Endothelial cell of umbilical vein (primary cell): ENCODE measurements at regions of chr6 and their contacts with region 1.

Region 1: DNA sequence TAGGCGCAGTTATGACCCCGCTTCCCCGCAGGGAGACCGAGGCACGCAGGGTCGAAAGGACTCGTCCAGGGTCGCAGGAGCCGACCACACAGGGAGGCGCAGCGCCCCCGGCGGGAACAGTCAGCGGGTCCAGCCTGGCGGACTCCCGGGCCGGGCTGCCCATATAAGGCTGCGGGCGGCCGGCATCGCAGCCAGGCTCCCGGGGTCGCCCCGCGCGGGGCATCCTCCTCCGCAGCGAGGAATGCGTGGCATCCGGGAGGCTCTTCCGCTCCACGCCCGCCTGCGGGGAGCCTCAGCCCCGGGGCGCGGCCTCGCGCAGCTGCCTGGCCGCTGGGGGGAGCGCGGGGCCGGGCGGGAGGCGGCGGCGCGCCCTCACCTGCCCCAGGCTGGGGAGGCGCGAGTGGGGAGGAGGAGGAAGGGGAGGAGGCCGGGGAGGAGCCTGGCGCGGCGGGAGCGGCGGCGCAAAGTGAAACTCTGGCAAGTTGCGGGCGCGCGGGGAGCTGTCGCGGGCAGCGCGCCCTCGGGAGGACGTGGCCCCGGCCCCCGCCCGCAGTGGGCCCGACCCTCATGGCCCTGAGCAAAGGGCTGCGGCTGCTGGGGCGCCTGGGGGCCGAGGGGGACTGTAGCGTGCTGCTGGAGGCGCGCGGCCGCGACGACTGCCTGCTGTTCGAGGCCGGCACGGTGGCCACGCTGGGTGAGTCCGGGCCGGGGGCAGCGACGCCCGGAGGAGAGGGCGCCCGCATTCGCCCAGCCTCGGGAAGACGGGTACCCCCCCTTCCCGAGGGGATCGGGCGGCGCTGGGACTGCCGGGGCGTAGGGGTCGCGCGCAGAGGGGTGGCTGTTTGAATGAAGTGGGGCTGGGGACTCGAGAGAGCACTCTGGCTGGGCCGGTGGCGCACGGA is at the start of gene SYNJ2:
- DNase-seq: peak; percentile 73
- H3K4me3 ChIP-seq: peak within 1 kb of the TSS; percentile 59 to 91 (median 87)
- H3K27ac ChIP-seq: peak within 1 kb of the TSS; percentile 85
- H3K4me1 ChIP-seq: peaks cover 21% of the 10 kb centered on the region
- H3K27me3 ChIP-seq: no peaks in the 10 kb centered on the region
- CTCF ChIP-seq: peak; percentile 67 to 79
- POLR2A ChIP-seq: peak; percentile 38
- total RNA-seq, gene SYNJ2: 71.8 and 78.2 TPM in 2 replicates

Region 2: DNA sequence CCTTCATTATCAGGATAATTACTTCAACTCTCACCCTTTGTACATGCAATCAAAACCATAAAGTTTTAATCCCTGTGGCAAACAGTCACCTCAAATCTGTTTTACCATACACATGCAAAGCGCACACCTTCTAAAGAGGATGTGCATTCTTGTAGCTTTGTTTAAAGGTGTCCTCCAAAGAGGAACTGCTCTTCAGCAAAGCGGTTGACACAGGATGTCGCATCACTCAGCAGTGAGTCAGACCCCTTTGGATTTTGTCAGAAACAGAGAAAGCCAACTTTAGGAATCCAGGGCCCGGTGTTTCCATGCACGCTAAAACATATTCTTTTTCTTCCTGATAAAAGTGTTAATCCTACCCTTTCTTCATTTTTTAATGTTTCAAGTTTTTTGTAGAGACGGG is 1472.7 kb before region 1 on chr6:
- CTCF ChIA-PET with region 1: no interaction called
- POLR2A ChIA-PET with region 1: no interaction called
- dilution Hi-C with region 1: no loop called
- intact Hi-C with region 1: no loop called
- DNase-seq: no peak
- H3K4me3 ChIP-seq: no peak overlapping the region
- H3K27ac ChIP-seq: no peak overlapping the region
- H3K4me1 ChIP-seq: no peaks in the 10 kb centered on the region
- H3K27me3 ChIP-seq: no peaks in the 10 kb centered on the region
- CTCF ChIP-seq: no peak
- POLR2A ChIP-seq: no peak

Region 3: GRCh38 chr6:158002951-158003853 is 21.6 kb after region 1 on chr6:
- CTCF ChIA-PET with region 1: interaction called, 28 read pairs
- POLR2A ChIA-PET with region 1: no interaction called
- dilution Hi-C with region 1: no loop called
- intact Hi-C with region 1: loop called (anchors 1 kb)
- DNase-seq: peak; percentile 97
- H3K4me3 ChIP-seq: no peak overlapping the region
- H3K27ac ChIP-seq: peak overlapping the region; percentile 91
- H3K4me1 ChIP-seq: peaks cover 32% of the 10 kb centered on the region
- H3K27me3 ChIP-seq: no peaks in the 10 kb centered on the region
- CTCF ChIP-seq: no peak
- POLR2A ChIP-seq: peak; percentile 43

Region 4: GRCh38 chr6:158026054-158026900 is 44.6 kb after region 1 on chr6:
- CTCF ChIA-PET with region 1: interaction called, 44 read pairs
- POLR2A ChIA-PET with region 1: interaction called, 6 read pairs
- dilution Hi-C with region 1: no loop called
- intact Hi-C with region 1: loop called (anchors 1 kb)
- DNase-seq: peak; percentile 98
- H3K4me3 ChIP-seq: no peak overlapping the region
- H3K27ac ChIP-seq: peak overlapping the region; percentile 83
- H3K4me1 ChIP-seq: peaks cover 32% of the 10 kb centered on the region
- H3K27me3 ChIP-seq: no peaks in the 10 kb centered on the region
- CTCF ChIP-seq: peak; percentile 74 to 90
- POLR2A ChIP-seq: no peak

Region 5: DNA sequence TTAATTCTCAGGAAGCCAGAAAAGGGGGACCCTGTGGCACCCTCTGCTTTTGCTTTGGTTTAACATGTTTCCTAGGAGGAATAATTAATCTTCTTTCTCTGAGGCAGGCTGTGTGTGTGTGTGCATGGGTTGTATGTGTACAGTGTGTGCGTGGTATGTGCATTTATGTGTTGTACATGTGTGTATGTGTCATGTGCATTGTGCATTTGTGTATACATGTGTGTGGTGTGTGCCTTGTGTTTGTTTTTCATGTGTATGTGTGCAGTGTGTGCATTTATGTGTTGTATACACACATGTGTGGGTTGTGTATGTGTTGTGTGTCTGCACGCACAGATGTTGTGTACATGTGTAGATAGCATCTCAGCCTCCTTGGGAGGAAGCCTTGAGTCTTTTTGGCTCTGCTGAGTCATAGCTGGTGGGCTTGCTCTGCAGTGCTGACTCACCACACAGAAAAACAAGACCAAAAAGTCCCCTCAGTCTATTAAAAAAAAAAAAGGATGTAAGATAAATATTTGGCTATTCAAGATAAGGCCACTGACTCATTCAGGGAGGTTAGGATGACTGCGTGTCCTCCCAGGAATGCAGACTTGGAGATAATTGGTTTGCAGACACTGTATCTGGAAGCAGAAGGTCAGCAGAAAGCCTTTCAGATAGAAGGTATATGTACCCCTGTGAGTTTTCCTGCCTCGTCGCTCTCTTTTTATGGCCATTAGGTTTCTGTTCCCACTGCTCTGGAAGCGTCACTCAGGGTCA is 58.6 kb after region 1 on chr6:
- CTCF ChIA-PET with region 1: interaction called, 6 read pairs
- POLR2A ChIA-PET with region 1: no interaction called
- dilution Hi-C with region 1: no loop called
- intact Hi-C with region 1: loop called (anchors 1 kb)
- DNase-seq: peak; percentile 99
- H3K4me3 ChIP-seq: no peak overlapping the region
- H3K27ac ChIP-seq: peak overlapping the region; percentile 99
- H3K4me1 ChIP-seq: peaks cover 38% of the 10 kb centered on the region
- H3K27me3 ChIP-seq: no peaks in the 10 kb centered on the region
- CTCF ChIP-seq: no peak
- POLR2A ChIP-seq: peak; percentile 89